Heart left ventricle (tissue), 16 donors: ENCODE measurements at regions of chr19 and their contacts with region 1.

Region 1: DNA sequence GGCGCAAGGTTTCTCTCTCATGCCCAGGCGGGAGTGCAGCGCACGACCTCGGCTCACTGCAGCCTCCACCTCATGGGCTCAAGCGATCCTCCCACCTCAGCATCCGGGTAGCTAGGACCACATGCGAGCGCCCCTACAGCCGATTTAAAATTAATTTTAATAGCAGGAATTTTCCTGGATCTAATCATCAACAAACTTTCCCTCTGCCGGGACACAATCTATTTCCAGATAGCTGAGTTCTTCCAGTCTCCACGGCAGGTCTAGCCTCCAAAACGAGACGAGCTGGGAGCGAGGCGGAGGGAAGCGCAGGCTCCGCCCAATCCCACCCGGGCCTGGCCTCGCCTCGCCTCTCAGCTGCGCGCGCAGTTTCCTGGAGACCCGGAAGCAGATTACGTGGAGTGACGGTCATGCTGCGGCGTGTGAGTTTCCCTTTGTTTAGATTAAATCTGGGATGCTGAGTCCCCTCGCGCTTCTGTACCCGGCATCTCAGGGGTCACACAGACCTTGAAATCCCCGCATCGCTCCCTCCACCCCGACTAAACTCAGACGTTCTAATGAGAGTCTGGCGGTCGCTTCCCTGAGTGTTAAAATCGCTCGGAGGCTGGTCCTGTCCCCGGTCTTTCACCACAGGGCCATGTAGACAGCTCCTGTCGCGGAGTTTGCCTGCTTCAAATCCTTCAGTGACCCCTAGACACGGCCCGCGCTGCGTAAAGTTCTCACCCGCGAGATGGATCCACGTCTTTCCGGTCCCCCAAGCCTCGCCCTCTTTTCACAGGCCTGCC is at the start of gene ZNF880:
- DNase-seq: peak; percentile 94 to 96 (median 95)
- ATAC-seq: peak; percentile 99 to 100 (median 100)
- H3K4me3 ChIP-seq: peak within 1 kb of the TSS; percentile 58 to 96 (median 80)
- H3K27ac ChIP-seq: peak within 1 kb of the TSS; percentile 80 to 97 (median 92)
- H3K4me1 ChIP-seq: peaks cover 0 to 10% (median 7%) of the 10 kb centered on the region in 12 donors
- H3K27me3 ChIP-seq: no peaks in the 10 kb centered on the region
- CTCF ChIP-seq: peak in 3 of 12 donors; percentile 13 to 33 (median 15)
- POLR2A ChIP-seq: peak in 1 of 2 donors; percentile 40
- total RNA-seq, gene ZNF880: 11.4 to 30.6 (median 17.0) TPM

Region 2: GRCh38 chr19:52258426-52258825 is 111.3 kb before region 1 on chr19:
- intact Hi-C with region 1: no loop called
- DNase-seq: no peak
- ATAC-seq: no peak
- H3K4me3 ChIP-seq: no peak overlapping the region
- H3K27ac ChIP-seq: no peak overlapping the region
- H3K4me1 ChIP-seq: no peaks in the 10 kb centered on the region
- H3K27me3 ChIP-seq: no peaks in the 10 kb centered on the region
- CTCF ChIP-seq: no peak
- POLR2A ChIP-seq: no peak

Region 3: DNA sequence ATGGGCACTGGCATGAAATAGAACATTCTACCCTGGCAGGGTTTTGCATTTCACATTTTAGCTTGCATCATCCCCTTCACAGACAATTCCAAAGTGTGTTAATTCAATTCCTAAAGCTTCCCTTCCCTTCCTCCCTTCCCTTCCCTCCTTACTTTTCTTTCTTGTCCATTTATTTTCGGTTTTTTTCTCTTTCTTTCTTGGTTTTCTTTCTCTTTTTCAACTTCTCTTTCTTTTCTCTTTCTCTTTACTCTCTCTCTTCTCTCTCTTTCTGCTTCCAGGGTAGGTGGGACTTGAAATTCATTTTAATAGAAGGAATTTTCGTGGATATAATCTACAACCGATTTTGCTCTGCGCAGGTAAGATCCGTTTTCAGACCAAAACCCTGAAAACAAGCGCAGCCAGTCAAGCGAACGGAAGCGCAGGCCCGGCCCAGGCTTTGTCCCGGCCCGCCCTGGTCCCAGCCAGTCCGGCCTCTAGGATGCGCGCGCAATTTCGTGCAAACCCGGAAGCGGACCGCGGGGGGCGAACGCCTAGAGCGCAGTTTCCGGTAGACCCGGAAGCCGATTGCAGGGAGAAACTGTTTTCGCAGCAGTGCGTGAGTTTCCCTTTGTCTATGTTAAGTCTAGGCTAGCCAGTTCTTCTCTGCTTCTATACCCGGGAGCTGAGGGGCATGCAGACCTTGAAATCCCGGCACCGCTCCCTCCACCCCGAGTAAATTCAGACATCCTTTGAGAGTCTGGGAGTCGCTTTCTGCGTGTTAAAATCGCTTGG is 27.7 kb after region 1 on chr19 and contains the start of gene ZNF528:
- intact Hi-C with region 1: loop called in 2 of 10 experiments (anchors 1 to 2 kb)
- DNase-seq: peak; percentile 97 to 99 (median 98)
- ATAC-seq: peak; percentile 100
- H3K4me3 ChIP-seq: peak within 1 kb of the TSS; percentile 53 to 96 (median 78)
- H3K27ac ChIP-seq: peak within 1 kb of the TSS; percentile 35 to 84 (median 72)
- H3K4me1 ChIP-seq: peaks cover 0 to 21% (median 13%) of the 10 kb centered on the region in 12 donors
- H3K27me3 ChIP-seq: no peaks in the 10 kb centered on the region
- CTCF ChIP-seq: peak in 1 of 12 donors; percentile 4
- POLR2A ChIP-seq: peak; percentile 13 to 61
- total RNA-seq, gene ZNF528: 8.2 to 24.6 (median 18.4) TPM

Region 4: GRCh38 chr19:52444506-52444905 is 74.8 kb after region 1 on chr19:
- intact Hi-C with region 1: no loop called
- DNase-seq: no peak
- ATAC-seq: no peak
- H3K4me3 ChIP-seq: no peak overlapping the region
- H3K27ac ChIP-seq: no peak overlapping the region
- H3K4me1 ChIP-seq: no peaks in the 10 kb centered on the region
- H3K27me3 ChIP-seq: no peaks in the 10 kb centered on the region
- CTCF ChIP-seq: no peak
- POLR2A ChIP-seq: no peak